T-cell (primary cell): ENCODE measurements at regions of chr7 and their contacts with region 1.

Region 1: GRCh38 chr7:40192036-40192435 is 57.2 kb downstream of the SUGCT start:
- DNase-seq: no peak
- ATAC-seq: no peak
- H3K4me3 ChIP-seq: no peak overlapping the region
- H3K4me3 Mint-ChIP-seq: no peak overlapping the region
- H3K27ac ChIP-seq: no peak overlapping the region
- H3K27ac Mint-ChIP-seq: no peak overlapping the region
- H3K4me1 ChIP-seq: no peaks in the 10 kb centered on the region
- H3K4me1 Mint-ChIP-seq: no peaks in the 10 kb centered on the region
- H3K27me3 ChIP-seq: no peaks in the 10 kb centered on the region
- H3K27me3 Mint-ChIP-seq: no peaks in the 10 kb centered on the region

Region 2: DNA sequence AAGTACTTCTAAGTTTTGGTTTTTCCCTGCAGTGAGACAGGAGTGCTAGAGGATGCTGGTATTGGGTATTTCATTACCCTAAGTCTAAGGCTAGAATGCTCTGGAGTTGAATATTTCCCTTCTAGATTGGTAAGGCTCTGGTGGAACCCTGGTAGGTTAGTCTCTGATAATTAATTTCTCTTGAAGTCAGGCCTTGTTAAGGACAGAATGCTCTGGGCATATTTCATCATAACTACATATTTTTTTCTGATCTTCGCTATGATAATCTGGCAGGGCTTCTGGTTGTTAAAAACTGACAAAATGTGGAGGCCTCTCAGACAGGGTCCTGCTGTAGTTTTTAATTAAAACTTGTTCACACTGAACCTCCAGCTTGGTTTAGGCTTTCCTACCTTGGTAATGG is 158.2 kb before region 1 on chr7:
- CTCF ChIA-PET with region 1: no interaction called
- POLR2A ChIA-PET with region 1: interaction called in 1 of 2 experiments, 11 read pairs
- DNase-seq: no peak
- ATAC-seq: no peak
- H3K4me3 ChIP-seq: no peak overlapping the region
- H3K4me3 Mint-ChIP-seq: no peak overlapping the region
- H3K27ac ChIP-seq: no peak overlapping the region
- H3K27ac Mint-ChIP-seq: peak overlapping the region in 1 of 2 donors; percentile 59
- H3K4me1 ChIP-seq: no peaks in the 10 kb centered on the region
- H3K4me1 Mint-ChIP-seq: peaks cover 22 to 42% (median 40%) of the 10 kb centered on the region in 3 donors
- H3K27me3 ChIP-seq: no peaks in the 10 kb centered on the region
- H3K27me3 Mint-ChIP-seq: no peaks in the 10 kb centered on the region

Region 3: GRCh38 chr7:40134428-40135316 is 57.4 kb before region 1 on chr7 and contains the starts of genes MPLKIP and SUGCT:
- CTCF ChIA-PET with region 1: no interaction called
- POLR2A ChIA-PET with region 1: no interaction called
- DNase-seq: peak; percentile 65 to 93 (median 82)
- ATAC-seq: peak; percentile 88 to 95 (median 90)
- H3K4me3 ChIP-seq: peak within 1 kb of the TSS; percentile 87 to 94
- H3K4me3 Mint-ChIP-seq: peak within 1 kb of the TSS; percentile 90 to 97 (median 95)
- H3K27ac ChIP-seq: peak within 1 kb of the TSS; percentile 84
- H3K27ac Mint-ChIP-seq: peak within 1 kb of the TSS; percentile 96 to 99
- H3K4me1 ChIP-seq: peaks cover 14 to 22% of the 10 kb centered on the region in 2 experiments
- H3K4me1 Mint-ChIP-seq: peaks cover 43% of the 10 kb centered on the region in 3 donors
- H3K27me3 ChIP-seq: peaks cover 0 to 11% of the 10 kb centered on the region in 2 experiments
- H3K27me3 Mint-ChIP-seq: peaks cover 0 to 5% of the 10 kb centered on the region in 2 donors
- total RNA-seq, gene MPLKIP: 16.6 to 39.0 (median 33.8) TPM
- total RNA-seq, gene SUGCT: 1.3 to 3.1 (median 2.3) TPM